ENCODE measurements at regions of chr5 and their contacts with region 1.

Region 1: DNA sequence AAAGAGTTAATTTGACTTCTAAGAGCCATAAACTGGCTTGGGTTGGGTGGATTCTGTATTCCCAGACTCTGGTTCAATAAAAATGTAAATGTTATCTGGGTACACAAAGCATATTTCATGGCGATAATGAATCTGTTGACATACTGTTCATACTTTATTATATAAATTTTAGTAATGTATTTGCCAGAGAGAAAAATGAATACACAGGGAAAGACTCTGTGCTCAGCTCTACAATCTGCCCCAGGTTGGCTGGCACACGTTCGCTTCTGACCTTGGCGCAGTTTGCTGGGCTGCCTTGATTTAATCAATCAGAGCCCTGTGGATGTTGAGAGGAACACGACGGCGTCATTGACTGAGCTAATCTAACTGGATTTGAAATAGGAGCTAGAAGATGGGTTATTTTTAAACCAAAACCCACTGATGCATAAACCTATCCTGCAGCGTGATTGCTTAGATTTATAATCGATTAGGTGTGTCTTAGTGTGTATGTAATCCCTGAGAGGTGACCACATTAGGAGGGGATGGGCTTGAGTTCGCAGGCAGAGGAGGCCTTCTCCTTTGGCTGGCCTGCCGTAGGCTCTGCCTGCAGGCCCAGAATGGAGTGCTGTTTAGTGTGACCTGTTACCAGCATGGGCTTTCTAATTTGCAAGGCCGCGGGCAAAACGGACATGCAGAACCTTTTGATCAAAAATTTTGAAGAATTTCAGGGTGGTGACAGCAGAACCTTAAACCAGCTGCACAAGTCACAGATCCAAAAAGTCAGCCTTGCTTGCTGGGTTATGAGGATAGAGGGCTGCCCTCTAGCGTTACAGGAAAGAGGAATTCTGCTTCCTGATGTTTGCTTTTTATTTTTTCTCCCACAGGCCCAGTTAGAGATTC is 3.9 kb upstream of the ADCY2 start:
- DNase-seq: peak in 2 of 5 donors; percentile 19 to 33
- H3K4me3 ChIP-seq: no peak overlapping the region
- H3K27ac ChIP-seq: no peak overlapping the region
- H3K4me1 ChIP-seq: no peaks in the 10 kb centered on the region
- H3K27me3 ChIP-seq: no peaks in the 10 kb centered on the region
- CTCF ChIP-seq: peak; percentile 13 to 20 (median 18)
- EP300 ChIP-seq: no peak
- POLR2A ChIP-seq: no peak

Region 2: DNA sequence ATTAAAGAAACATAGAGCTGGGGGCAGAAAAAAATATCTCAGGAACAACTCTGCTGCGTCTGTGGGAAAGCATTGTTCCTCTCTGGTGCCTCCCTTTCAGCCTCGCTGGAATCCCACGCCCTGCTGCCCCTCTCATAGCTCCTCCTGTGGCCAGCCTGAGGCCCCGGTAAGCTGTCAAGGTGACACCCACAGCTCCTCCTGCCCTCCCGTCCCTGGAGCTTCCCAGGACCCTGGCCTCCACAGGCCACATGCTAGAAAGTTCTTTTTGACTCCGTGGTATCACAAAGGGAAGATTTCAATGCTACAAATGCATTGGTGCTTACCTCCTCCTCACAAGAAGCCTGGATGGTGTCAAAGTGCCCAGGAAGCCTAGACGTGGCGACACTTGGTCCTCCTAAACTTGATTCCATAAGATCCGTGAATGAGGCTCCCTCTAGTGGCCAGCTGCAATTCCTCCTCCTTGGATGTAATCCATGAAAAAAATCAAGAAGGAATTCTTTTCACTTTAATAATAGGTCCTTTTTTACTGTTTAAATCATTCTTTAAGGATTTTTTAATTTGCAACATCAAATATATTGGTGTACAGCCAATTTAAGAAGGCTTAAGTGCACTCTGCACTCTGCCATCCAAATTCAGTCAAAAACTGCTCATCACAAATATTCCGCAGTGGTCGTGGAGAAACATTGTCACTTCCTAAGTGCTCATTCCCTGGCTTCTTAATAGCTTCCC is 354.0 kb after region 1 on chr5:
- intact Hi-C with region 1: loop called in 2 of 4 experiments (anchors 2 to 10 kb)
- DNase-seq: peak; percentile 60 to 79 (median 71)
- H3K4me3 ChIP-seq: no peak overlapping the region
- H3K27ac ChIP-seq: no peak overlapping the region
- H3K4me1 ChIP-seq: no peaks in the 10 kb centered on the region
- H3K27me3 ChIP-seq: no peaks in the 10 kb centered on the region
- CTCF ChIP-seq: peak; percentile 45 to 72 (median 58)
- EP300 ChIP-seq: no peak
- POLR2A ChIP-seq: no peak

Region 3: DNA sequence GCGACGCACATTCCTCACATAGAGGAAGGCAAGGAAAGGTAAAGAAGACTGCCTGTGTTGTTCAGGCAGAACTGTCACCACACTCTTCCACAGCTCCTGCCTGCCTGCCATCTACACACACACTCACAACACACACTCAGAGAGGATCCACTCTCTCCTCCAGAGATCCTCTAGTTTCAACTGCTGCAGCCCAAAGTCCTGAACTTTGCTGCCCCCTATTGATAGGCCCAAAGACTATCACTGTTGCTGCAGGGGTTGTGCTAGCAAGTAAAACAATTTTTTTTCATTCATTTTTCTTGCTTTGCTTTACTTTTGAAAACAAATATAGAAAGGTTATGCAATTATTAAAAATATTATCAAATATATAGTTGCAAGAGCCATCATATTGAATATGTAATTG is 464.8 kb after region 1 on chr5:
- intact Hi-C with region 1: loop called in 1 of 4 experiments (anchors 10 kb)
- DNase-seq: peak in 1 of 5 donors; percentile 18
- H3K4me3 ChIP-seq: no peak overlapping the region
- H3K27ac ChIP-seq: no peak overlapping the region
- H3K4me1 ChIP-seq: peaks cover 5% of the 10 kb centered on the region
- H3K27me3 ChIP-seq: no peaks in the 10 kb centered on the region
- CTCF ChIP-seq: peak in 1 of 3 donors; percentile 17
- EP300 ChIP-seq: no peak
- POLR2A ChIP-seq: no peak